Motor neuron (in vitro differentiated cells): ENCODE measurements at regions of chr10 and their contacts with region 1.

Region 1: GRCh38 chr10:98391578-98391991 is 23.4 kb downstream of the PYROXD2 start:
- ATAC-seq: peak in 1 of 8 experiments; percentile 6
- H3K4me3 ChIP-seq: no peak overlapping the region
- H3K27ac ChIP-seq: no peak overlapping the region
- H3K4me1 ChIP-seq: peaks cover 0 to 4% of the 10 kb centered on the region in 2 donors

Region 2: GRCh38 chr10:98242823-98243222 is 148.8 kb before region 1 on chr10:
- in situ Hi-C with region 1: loop called in 1 of 9 experiments (anchors 25 kb)
- ATAC-seq: peak in 4 of 8 experiments; percentile 22 to 49 (median 30)
- H3K4me3 ChIP-seq: no peak overlapping the region
- H3K27ac ChIP-seq: no peak overlapping the region
- H3K4me1 ChIP-seq: peaks cover 15 to 17% of the 10 kb centered on the region in 2 donors

Region 3: GRCh38 chr10:98536551-98536950 is 145.0 kb after region 1 on chr10:
- in situ Hi-C with region 1: no loop called
- ATAC-seq: peak in 3 of 8 experiments; percentile 14 to 64 (median 41)
- H3K4me3 ChIP-seq: no peak overlapping the region
- H3K27ac ChIP-seq: no peak overlapping the region
- H3K4me1 ChIP-seq: peaks cover 2 to 3% of the 10 kb centered on the region in 2 donors

Region 4: DNA sequence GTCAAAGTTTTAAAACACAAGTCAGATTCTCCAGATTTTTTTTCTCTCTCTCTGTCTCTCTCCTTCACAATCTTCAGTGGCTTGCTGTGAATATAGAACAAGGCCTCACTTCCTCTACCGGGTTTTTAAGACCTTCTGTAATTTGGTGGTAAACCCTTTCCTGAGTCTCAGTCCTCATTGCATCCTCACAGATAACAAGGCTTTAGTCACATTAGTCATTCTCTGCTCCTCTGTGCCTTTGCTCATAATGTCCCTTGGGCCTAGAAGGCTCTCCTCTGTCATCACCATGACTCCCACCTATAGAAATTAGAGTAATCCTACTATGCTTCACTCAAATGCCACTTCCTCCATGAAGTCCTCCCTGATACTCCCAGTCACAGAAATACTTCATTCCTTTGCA is 227.9 kb after region 1 on chr10:
- in situ Hi-C with region 1: no loop called
- ATAC-seq: no peak
- H3K4me3 ChIP-seq: no peak overlapping the region
- H3K27ac ChIP-seq: no peak overlapping the region
- H3K4me1 ChIP-seq: no peaks in the 10 kb centered on the region

Region 5: DNA sequence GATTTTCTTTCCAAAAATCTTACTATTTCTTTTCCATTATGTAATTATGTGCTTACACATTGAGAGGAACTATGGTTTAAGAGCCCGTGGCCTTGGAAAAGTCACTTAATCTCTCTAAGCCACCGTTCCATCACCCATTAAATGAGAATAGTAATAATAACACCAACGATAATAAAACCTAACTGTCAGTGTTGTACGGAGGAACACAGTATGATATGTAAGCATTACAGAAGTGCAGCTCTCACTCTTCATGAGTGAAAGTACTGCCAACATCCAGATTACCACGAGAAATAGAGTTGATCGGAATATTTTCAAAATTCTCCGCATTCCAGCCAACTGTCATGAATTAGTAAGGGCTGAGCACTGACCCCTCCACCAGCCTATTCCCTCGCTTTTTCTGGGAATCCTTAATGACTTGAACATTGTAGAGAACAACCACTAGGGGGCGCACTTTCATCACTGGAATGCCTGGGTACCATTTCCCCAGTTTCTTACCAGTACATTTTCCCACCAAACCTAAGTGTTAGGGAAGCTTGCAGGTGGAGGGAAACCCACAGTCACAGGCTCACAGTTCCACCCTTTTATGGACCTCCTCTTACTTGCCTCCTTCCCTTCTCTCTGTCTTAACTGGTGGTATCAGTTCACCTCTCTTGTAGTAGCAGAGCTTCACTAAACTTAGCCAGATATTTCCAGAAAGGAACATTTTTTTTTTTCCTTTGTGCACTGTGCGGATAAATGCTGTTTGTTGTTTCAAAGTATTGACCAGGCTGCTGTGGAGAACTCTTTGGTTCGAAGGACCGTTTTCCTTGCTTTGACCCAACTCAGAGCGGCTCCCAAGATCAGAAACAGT is 1168.9 kb after region 1 on chr10:
- in situ Hi-C with region 1: no loop called
- ATAC-seq: peak in 4 of 8 experiments; percentile 38 to 94 (median 88)
- H3K4me3 ChIP-seq: no peak overlapping the region
- H3K27ac ChIP-seq: no peak overlapping the region
- H3K4me1 ChIP-seq: no peaks in the 10 kb centered on the region